ENCODE measurements at regions of chr17 and their contacts with region 1.

Region 1: DNA sequence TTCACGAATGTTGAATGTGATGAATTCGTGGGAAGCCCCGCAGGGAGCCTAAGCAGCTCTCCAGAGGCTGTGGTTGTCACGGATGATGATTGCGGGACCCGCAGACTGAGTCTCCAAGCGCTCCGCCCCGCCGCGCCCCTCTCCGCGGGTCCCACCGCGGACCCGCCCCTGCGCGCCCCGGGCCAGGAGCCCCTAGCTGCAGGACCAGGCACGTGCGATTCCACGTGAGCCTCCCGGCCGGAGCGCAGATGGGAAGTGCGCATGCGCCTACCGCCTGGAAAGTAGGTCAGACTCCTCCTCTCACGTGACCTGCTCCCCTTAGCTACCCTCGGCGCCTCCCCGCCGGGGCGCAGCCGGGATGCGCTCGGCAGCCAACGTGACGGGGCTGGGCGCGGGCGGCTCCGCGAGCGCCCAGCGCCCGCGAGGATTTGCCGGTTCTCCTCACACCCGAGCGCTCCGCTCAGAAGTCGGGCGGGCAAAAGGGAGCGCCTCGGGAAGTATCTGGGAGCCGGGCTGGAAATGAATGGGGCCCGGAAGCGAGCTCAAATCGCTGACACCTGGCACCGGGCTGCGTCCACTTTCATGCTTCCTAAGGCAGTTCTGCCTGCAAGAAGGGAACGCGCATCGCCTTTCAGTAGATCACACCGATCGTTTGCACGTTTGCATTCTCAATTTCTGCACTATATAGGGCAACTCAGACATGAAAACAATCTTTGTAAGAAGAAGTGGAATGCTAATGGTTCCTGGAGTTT is 26.4 kb upstream of the HLF start:
- DNase-seq: peak; percentile 91
- ATAC-seq: peak; percentile 99
- H3K4me3 Mint-ChIP-seq: peak overlapping the region; percentile 74
- H3K27ac Mint-ChIP-seq: peak overlapping the region; percentile 59
- H3K4me1 Mint-ChIP-seq: peaks cover 14% of the 10 kb centered on the region
- H3K27me3 Mint-ChIP-seq: peaks cover 11% of the 10 kb centered on the region

Region 2: DNA sequence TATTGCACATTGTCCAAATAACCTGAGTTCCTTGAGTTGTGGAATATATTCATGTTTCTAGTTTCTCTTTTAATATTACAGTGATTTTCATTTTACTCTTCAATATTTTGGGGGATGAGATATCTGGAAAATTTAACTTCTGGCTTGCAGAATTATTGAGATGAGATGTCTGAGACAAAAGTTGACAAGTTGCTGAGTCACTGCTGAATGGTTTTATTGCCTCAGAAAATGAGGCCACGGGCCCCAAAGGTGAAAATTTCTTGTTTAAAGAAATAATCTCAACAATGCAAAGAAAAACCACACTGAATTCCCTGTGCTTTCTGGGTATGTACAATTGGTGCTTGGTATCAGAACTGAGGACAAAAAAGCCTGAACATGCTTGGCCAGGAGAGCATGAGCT is 466.9 kb before region 1 on chr17:
- CTCF ChIA-PET with region 1: no interaction called
- POLR2A ChIA-PET with region 1: no interaction called
- intact Hi-C with region 1: no loop called
- DNase-seq: no peak
- ATAC-seq: no peak
- H3K4me3 Mint-ChIP-seq: no peak overlapping the region
- H3K27ac Mint-ChIP-seq: no peak overlapping the region
- H3K4me1 Mint-ChIP-seq: no peaks in the 10 kb centered on the region
- H3K27me3 Mint-ChIP-seq: peaks cover 3% of the 10 kb centered on the region

Region 3: DNA sequence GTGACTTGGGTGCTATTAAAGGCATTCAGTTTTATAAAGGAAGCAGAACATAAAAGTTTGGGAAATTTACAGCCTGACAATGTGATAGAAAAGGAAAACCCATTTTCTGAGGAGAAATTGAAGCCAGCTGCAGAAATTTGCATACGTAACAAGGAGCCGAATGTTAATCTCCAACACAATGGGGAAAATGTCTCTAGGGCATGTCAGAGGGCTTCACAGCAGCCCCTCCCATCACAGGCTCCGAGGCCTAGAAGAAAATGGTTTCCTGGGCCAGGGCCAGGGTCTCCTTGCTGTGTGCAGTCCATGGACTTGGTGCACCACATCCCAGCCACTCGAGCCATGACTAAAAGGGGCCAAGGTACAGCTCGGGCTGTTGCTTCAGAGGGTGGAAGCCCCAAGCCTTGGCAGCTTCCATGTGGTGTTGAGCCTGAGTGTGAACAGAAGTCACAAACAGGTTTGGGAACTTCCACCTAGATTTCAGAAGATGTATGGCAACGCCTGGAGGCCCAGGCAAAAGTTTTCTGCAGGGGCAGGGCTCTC is 361.6 kb before region 1 on chr17:
- CTCF ChIA-PET with region 1: no interaction called
- POLR2A ChIA-PET with region 1: no interaction called
- intact Hi-C with region 1: no loop called
- DNase-seq: no peak
- ATAC-seq: no peak
- H3K4me3 Mint-ChIP-seq: no peak overlapping the region
- H3K27ac Mint-ChIP-seq: no peak overlapping the region
- H3K4me1 Mint-ChIP-seq: no peaks in the 10 kb centered on the region
- H3K27me3 Mint-ChIP-seq: peaks cover 11% of the 10 kb centered on the region

Region 4: GRCh38 chr17:54968262-54968987 is 269.9 kb before region 1 on chr17 and contains the starts of genes COX11 and STXBP4:
- CTCF ChIA-PET with region 1: no interaction called
- POLR2A ChIA-PET with region 1: no interaction called
- intact Hi-C with region 1: loop called (anchors 1 to 2 kb)
- DNase-seq: peak; percentile 96
- ATAC-seq: peak; percentile 97
- H3K4me3 Mint-ChIP-seq: no peak within 1 kb of the TSS
- H3K27ac Mint-ChIP-seq: peak within 1 kb of the TSS; percentile 48
- H3K4me1 Mint-ChIP-seq: peaks cover 23% of the 10 kb centered on the region
- H3K27me3 Mint-ChIP-seq: no peaks in the 10 kb centered on the region
- total RNA-seq, gene COX11: 42.6 to 45.4 TPM
- total RNA-seq, gene STXBP4: 5.4 to 7.2 TPM

Region 5: GRCh38 chr17:55264645-55265298 is 26.4 kb after region 1 on chr17 and contains the start of gene HLF:
- CTCF ChIA-PET with region 1: no interaction called
- POLR2A ChIA-PET with region 1: no interaction called
- intact Hi-C with region 1: loop called (anchors 1 kb)
- DNase-seq: peak; percentile 86
- ATAC-seq: peak; percentile 94
- H3K4me3 Mint-ChIP-seq: peak within 1 kb of the TSS; percentile 47
- H3K27ac Mint-ChIP-seq: no peak within 1 kb of the TSS
- H3K4me1 Mint-ChIP-seq: peaks cover 16% of the 10 kb centered on the region
- H3K27me3 Mint-ChIP-seq: peaks cover 54% of the 10 kb centered on the region
- total RNA-seq, gene HLF: 0.95 to 1.0 TPM

Region 6: DNA sequence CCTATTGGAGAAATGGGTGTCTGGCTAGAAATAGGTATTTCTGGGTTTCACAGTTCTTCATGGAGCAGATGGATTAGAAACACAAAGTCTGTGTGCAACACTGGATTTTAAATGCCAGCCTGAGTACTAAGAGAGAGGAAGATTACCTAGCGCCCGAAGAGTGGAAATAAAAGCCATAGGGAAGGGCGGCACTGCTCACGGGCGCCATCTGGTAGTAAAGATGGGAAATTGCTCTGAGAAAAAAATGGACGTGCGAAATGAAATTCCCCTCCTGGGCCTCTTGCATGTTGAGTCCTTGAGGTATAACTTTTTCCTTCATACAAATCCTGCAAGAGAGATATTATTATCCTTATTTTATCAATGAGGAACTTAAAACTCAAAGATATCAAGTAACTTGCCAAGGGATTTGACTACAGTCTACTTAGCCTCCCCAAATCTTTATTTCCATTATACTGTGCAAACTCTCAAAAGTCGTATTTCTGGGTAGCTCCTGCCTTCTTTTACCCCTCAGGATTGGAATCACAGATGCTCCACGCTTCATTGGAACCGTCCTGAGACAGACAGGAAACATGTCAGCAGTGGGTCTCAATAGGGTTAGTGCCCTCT is 110.5 kb after region 1 on chr17:
- CTCF ChIA-PET with region 1: interaction called, 4 read pairs
- POLR2A ChIA-PET with region 1: no interaction called
- intact Hi-C with region 1: loop called (anchors 2 to 10 kb)
- DNase-seq: peak; percentile 64
- ATAC-seq: no peak
- H3K4me3 Mint-ChIP-seq: no peak overlapping the region
- H3K27ac Mint-ChIP-seq: no peak overlapping the region
- H3K4me1 Mint-ChIP-seq: peaks cover 11% of the 10 kb centered on the region
- H3K27me3 Mint-ChIP-seq: peaks cover 3% of the 10 kb centered on the region